HAP-1 (cell line): ENCODE measurements at regions of chr2 and their contacts with region 1.

Region 1: GRCh38 chr2:197383823-197384222 is 51.0 kb downstream of the SF3B1 start:
- DNase-seq: no peak
- H3K4me3 ChIP-seq: no peak overlapping the region
- H3K4me1 ChIP-seq: no peaks in the 10 kb centered on the region
- H3K27me3 ChIP-seq: no peaks in the 10 kb centered on the region

Region 2: GRCh38 chr2:197184959-197185586 is 198.8 kb before region 1 on chr2:
- in situ Hi-C with region 1: loop called (anchors 5 kb)
- DNase-seq: no peak
- H3K4me3 ChIP-seq: no peak overlapping the region
- H3K4me1 ChIP-seq: no peaks in the 10 kb centered on the region
- H3K27me3 ChIP-seq: no peaks in the 10 kb centered on the region